Activated CD4-positive, alpha-beta memory T cell treated with anti-CD3 and anti-CD28 coated beads for 36 hours (primary cell): ENCODE measurements at regions of chr5 and their contacts with region 1.

Region 1: DNA sequence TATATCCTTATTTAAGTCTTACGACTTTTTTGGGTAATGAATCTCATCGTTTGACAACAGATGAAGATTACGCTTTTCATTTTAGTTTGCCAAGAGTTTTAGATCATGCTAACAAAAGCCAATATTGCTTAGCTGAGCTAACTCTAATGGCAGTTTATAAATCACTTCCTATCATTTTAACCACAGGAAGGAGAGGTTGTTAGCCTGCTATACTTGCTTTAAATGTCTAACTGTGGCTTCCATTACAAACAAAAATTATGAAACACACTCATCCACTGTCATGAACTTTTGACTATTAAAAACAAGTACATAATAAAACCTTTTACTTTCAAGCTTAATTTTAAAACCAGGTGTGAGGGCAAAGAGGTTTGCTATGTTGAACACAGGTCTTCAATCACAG is 53.7 kb upstream of the ANKH start:
- DNase-seq: no peak
- H3K4me3 Mint-ChIP-seq: peak overlapping the region; percentile 35
- H3K27ac Mint-ChIP-seq: peak overlapping the region; percentile 91
- H3K4me1 Mint-ChIP-seq: peaks cover 54% of the 10 kb centered on the region
- H3K27me3 Mint-ChIP-seq: no peaks in the 10 kb centered on the region

Region 2: DNA sequence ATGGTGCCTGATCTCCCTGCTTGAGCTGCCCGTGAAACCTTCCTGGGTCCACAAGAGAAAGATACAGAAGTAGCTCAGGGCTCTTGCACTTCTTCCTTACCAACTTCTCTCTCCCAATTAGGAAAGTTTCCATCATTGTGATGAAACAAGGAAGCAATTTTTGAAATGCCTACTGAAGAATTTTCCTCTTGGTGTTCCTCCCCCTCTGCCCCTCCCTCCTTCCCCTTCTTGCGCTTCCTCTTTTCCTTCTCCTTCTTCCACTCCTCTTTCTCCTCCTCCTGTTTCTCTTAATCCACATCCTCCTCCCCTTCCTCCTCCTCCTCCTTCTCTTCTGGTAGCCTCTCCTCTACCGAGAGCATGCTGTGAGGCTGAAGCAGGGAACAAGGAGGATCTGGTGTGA is 380.0 kb before region 1 on chr5:
- CTCF ChIA-PET with region 1: no interaction called
- POLR2A ChIA-PET with region 1: no interaction called
- intact Hi-C with region 1: no loop called
- DNase-seq: no peak
- H3K4me3 Mint-ChIP-seq: no peak overlapping the region
- H3K27ac Mint-ChIP-seq: no peak overlapping the region
- H3K4me1 Mint-ChIP-seq: peaks cover 4% of the 10 kb centered on the region
- H3K27me3 Mint-ChIP-seq: peaks cover 4% of the 10 kb centered on the region

Region 3: DNA sequence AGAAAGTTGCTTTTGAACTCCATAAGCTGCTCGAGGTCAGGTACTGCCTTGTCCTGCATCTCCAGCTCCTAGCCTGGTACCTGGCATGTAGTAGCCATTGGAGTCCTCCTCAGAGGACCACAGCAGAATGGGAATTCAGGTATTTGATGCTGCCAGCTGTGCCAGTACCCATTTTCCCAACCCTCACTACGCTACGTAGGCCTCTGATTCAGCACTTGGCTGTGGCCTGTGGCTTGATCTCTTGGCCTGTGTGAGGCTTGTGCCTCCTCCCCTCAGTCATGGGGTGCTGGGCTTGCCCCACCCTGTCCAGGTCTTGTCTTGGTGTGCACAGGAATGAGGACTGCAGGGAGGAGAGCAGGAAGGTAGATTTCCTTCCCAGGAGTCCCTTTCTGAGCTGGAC is 249.0 kb before region 1 on chr5:
- CTCF ChIA-PET with region 1: no interaction called
- POLR2A ChIA-PET with region 1: no interaction called
- intact Hi-C with region 1: loop called (anchors 2 kb)
- DNase-seq: peak; percentile 59
- H3K4me3 Mint-ChIP-seq: peak overlapping the region; percentile 30
- H3K27ac Mint-ChIP-seq: peak overlapping the region; percentile 89
- H3K4me1 Mint-ChIP-seq: peaks cover 75% of the 10 kb centered on the region
- H3K27me3 Mint-ChIP-seq: no peaks in the 10 kb centered on the region

Region 4: GRCh38 chr5:14720236-14720971 is 204.9 kb before region 1 on chr5:
- CTCF ChIA-PET with region 1: no interaction called
- POLR2A ChIA-PET with region 1: no interaction called
- intact Hi-C with region 1: loop called (anchors 5 kb)
- DNase-seq: no peak
- H3K4me3 Mint-ChIP-seq: no peak overlapping the region
- H3K27ac Mint-ChIP-seq: peak overlapping the region; percentile 19
- H3K4me1 Mint-ChIP-seq: peaks cover 46% of the 10 kb centered on the region
- H3K27me3 Mint-ChIP-seq: no peaks in the 10 kb centered on the region

Region 5: DNA sequence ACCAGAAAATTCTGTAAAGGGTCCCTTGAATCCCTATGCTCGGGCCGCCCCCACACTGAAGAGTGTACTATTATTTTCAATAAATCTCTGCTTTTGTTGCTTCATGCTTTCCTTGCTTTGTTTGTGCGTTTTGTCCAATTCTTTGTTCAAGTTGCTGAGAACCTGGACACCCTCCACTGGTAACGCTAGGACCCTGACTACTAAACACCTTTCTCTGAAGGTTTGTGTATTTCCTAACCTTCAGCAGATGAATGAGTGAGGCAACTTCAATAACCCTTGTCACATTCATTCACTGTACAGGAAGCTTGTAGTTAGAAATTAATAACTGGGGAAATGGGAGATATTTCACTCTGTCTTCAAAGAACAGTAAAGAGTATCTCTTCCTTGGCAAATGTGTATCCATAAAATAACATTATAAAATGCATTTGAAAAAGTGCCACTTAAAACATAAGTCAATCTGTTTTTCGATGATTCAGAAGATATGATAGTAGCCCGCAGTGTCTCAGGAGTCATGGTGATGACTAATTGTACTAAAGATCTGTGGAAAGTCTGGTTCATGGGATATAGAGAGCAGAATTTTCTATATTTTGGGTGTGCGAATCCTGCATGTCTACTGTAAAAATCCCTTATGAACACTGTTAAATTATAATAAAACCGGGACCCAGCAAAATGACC is 10.6 kb before region 1 on chr5:
- CTCF ChIA-PET with region 1: no interaction called
- POLR2A ChIA-PET with region 1: no interaction called
- intact Hi-C with region 1: loop called (anchors 1 kb)
- DNase-seq: no peak
- H3K4me3 Mint-ChIP-seq: no peak overlapping the region
- H3K27ac Mint-ChIP-seq: no peak overlapping the region
- H3K4me1 Mint-ChIP-seq: peaks cover 16% of the 10 kb centered on the region
- H3K27me3 Mint-ChIP-seq: no peaks in the 10 kb centered on the region

Region 6: DNA sequence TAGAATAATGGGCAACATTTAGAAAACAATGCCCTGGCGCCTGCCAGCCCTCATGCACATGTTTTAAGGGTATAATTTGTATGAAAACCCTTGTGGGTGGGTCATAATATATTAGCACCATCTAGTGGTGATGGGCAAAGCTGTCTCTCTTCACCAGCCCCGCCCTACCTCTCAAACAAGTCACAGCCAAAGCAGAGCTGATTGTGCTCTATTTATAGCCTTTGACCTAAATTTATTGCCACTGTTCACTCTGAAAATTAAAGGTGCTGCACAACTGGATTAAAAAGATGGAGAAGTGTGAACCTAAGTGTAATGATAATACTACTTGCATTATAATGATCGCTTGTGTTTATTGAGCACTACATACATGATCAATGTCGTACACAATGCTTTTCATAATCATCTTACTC is 78.2 kb after region 1 on chr5:
- CTCF ChIA-PET with region 1: interaction called, 3 read pairs
- POLR2A ChIA-PET with region 1: no interaction called
- intact Hi-C with region 1: loop called (anchors 2 kb)
- DNase-seq: peak; percentile 68
- H3K4me3 Mint-ChIP-seq: no peak overlapping the region
- H3K27ac Mint-ChIP-seq: no peak overlapping the region
- H3K4me1 Mint-ChIP-seq: peaks cover 6% of the 10 kb centered on the region
- H3K27me3 Mint-ChIP-seq: peaks cover 2% of the 10 kb centered on the region